ENCODE measurements at regions of chr11 and their contacts with region 1.

Region 1: GRCh38 chr11:125404776-125405435 is 91.2 kb downstream of the FEZ1 start:
- DNase-seq: peak; percentile 79 to 92
- ATAC-seq: peak; percentile 74 to 85 (median 81)
- H3K4me3 ChIP-seq: peak overlapping the region; percentile 39
- H3K27ac ChIP-seq: peak overlapping the region; percentile 92
- H3K4me1 ChIP-seq: peaks cover 64% of the 10 kb centered on the region
- H3K27me3 ChIP-seq: no peaks in the 10 kb centered on the region
- CTCF ChIP-seq: peak; percentile 96

Region 2: GRCh38 chr11:125201525-125202141 is 203.3 kb before region 1 on chr11:
- intact Hi-C with region 1: no loop called
- DNase-seq: peak; percentile 29 to 65
- ATAC-seq: peak; percentile 34 to 70 (median 51)
- H3K4me3 ChIP-seq: no peak overlapping the region
- H3K27ac ChIP-seq: no peak overlapping the region
- H3K4me1 ChIP-seq: peaks cover 16% of the 10 kb centered on the region
- H3K27me3 ChIP-seq: no peaks in the 10 kb centered on the region
- CTCF ChIP-seq: no peak

Region 3: GRCh38 chr11:125214571-125215565 is 190.0 kb before region 1 on chr11:
- intact Hi-C with region 1: loop called in 1 of 2 experiments (anchors 5 kb)
- DNase-seq: no peak
- ATAC-seq: no peak
- H3K4me3 ChIP-seq: no peak overlapping the region
- H3K27ac ChIP-seq: peak overlapping the region; percentile 51
- H3K4me1 ChIP-seq: peaks cover 35% of the 10 kb centered on the region
- H3K27me3 ChIP-seq: no peaks in the 10 kb centered on the region
- CTCF ChIP-seq: no peak

Region 4: GRCh38 chr11:125289419-125290098 is 115.3 kb before region 1 on chr11:
- intact Hi-C with region 1: loop called in 1 of 2 experiments (anchors 5 kb)
- DNase-seq: no peak
- ATAC-seq: no peak
- H3K4me3 ChIP-seq: no peak overlapping the region
- H3K27ac ChIP-seq: no peak overlapping the region
- H3K4me1 ChIP-seq: peaks cover 3% of the 10 kb centered on the region
- H3K27me3 ChIP-seq: no peaks in the 10 kb centered on the region
- CTCF ChIP-seq: no peak

Region 5: DNA sequence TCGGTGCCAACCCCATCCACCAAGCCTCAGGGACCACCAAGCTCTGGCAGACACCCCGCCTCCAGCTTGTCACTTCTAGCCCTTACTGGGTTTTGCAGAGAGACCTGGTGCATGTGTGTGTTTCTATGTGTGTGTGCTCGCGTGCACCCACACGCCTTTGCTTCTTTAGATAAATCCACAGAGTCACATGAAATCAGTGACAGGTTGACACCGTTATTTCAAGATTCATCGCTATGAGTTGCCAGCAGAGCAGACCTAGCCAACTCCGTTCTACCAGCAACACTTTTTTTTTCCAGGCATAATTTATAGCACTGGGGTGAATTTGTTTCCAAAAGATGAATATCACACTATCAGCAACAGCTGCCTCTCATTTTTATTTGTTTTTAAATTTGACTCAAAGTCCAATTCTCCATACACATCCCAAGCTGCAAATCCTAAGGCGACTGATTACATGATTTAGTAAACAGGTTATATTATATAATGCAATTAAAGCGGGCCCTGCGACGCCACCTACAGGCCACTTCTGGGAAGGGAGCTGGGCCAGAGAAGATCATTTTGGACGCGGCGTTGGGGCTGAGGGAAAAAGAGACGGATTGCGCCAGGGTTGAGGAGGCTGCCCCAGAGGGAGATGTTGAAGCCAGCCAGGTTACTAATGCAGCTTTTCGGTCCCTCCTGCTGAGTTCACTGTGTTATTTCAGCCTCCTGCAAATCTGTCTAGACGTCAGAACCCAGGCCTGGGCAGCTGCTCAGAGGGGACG is 59.3 kb before region 1 on chr11:
- intact Hi-C with region 1: loop called (anchors 2 to 5 kb)
- DNase-seq: peak; percentile 84 to 93
- ATAC-seq: peak; percentile 86 to 93 (median 88)
- H3K4me3 ChIP-seq: peak overlapping the region; percentile 2
- H3K27ac ChIP-seq: peak overlapping the region; percentile 67
- H3K4me1 ChIP-seq: peaks cover 41% of the 10 kb centered on the region
- H3K27me3 ChIP-seq: no peaks in the 10 kb centered on the region
- CTCF ChIP-seq: peak; percentile 91

Region 6: GRCh38 chr11:125376117-125376516 is 28.8 kb before region 1 on chr11:
- intact Hi-C with region 1: loop called (anchors 2 kb)
- DNase-seq: peak; percentile 81 to 91
- ATAC-seq: peak; percentile 85 to 92 (median 89)
- H3K4me3 ChIP-seq: peak overlapping the region; percentile 22
- H3K27ac ChIP-seq: peak overlapping the region; percentile 85
- H3K4me1 ChIP-seq: peaks cover 58% of the 10 kb centered on the region
- H3K27me3 ChIP-seq: no peaks in the 10 kb centered on the region
- CTCF ChIP-seq: no peak

Region 7: DNA sequence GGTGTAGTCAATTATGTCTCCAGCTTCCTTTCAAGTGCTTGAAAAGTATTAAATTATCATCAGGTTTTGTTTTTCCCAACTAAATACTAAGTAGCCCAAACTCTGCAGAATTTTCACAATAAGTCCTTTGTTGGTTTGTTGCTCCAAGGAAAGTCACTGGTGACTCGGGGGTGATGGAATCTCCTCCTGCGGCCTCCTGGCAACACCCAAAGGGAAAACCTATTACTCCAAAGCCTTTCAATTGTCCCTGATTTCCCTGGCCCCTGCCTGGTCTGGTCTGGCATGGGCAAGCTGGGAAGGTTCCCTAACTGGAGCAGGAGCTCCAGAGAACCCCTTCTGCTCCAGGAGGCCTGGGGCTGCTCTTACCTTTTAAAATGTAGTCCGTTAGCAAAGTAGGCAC is 43.2 kb after region 1 on chr11:
- intact Hi-C with region 1: no loop called
- DNase-seq: no peak
- ATAC-seq: no peak
- H3K4me3 ChIP-seq: no peak overlapping the region
- H3K27ac ChIP-seq: no peak overlapping the region
- H3K4me1 ChIP-seq: peaks cover 10% of the 10 kb centered on the region
- H3K27me3 ChIP-seq: no peaks in the 10 kb centered on the region
- CTCF ChIP-seq: no peak

Measured in psoas muscle (tissue), 8 donors.